Activated CD4-positive, alpha-beta memory T cell treated with anti-CD3 and anti-CD28 coated beads for 36 hours (primary cell): ENCODE measurements at regions of chr12 and their contacts with region 1.

Region 1: DNA sequence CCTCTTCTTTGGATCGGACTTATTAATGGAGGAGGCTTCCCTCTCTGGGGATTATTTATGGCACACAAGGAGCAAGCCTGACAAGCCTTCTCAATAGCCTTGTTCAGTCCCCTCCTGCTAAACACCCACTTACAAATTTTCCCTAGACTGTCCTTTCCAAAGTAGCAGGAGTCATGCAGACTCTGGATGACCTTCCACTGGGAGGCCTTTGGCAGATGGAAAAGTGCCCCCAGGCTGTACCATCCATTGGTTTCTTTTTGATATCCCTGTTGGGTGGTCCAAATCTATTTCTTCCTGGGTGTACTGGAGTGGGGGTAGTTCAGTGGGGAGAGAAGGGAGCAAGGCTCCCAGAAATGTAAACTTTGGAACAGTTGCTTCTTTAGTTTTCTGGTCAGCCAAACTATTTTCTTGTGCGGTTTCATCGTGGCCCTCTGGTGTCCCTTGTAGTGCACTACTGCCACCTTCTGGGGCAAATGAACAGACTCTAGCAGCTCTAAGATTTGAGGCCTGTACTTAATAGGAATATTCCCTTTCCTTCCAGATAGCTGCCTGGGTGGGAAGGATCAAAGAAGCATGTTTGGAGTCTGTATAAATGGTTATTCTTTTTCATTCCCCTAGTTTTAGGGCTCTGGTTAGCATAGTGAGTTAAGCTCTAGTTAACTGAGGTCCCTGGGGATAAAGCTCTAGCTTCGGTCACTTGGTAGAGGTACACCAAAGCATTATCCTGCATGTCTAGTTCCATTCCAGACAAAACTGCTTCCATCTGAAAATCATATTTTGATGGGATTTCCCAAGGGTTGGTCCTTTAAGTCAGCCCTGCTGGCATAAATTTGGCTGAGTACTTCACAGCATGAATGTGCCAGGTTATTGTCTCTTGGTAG is 409.5 kb downstream of the SLC6A15 start:
- DNase-seq: peak; percentile 31
- H3K4me3 Mint-ChIP-seq: no peak overlapping the region
- H3K27ac Mint-ChIP-seq: no peak overlapping the region
- H3K4me1 Mint-ChIP-seq: no peaks in the 10 kb centered on the region
- H3K27me3 Mint-ChIP-seq: no peaks in the 10 kb centered on the region

Region 2: GRCh38 chr12:82527165-82527780 is 1975.9 kb before region 1 on chr12:
- CTCF ChIA-PET with region 1: interaction called, 3 read pairs
- POLR2A ChIA-PET with region 1: no interaction called
- intact Hi-C with region 1: loop called (anchors 2 kb)
- DNase-seq: peak; percentile 11
- H3K4me3 Mint-ChIP-seq: no peak overlapping the region
- H3K27ac Mint-ChIP-seq: no peak overlapping the region
- H3K4me1 Mint-ChIP-seq: no peaks in the 10 kb centered on the region
- H3K27me3 Mint-ChIP-seq: peaks cover 2% of the 10 kb centered on the region

Region 3: GRCh38 chr12:83823431-83823963 is 679.6 kb before region 1 on chr12:
- CTCF ChIA-PET with region 1: no interaction called
- POLR2A ChIA-PET with region 1: no interaction called
- intact Hi-C with region 1: loop called (anchors 5 kb)
- DNase-seq: peak; percentile 51
- H3K4me3 Mint-ChIP-seq: no peak overlapping the region
- H3K27ac Mint-ChIP-seq: no peak overlapping the region
- H3K4me1 Mint-ChIP-seq: no peaks in the 10 kb centered on the region
- H3K27me3 Mint-ChIP-seq: no peaks in the 10 kb centered on the region

Region 4: DNA sequence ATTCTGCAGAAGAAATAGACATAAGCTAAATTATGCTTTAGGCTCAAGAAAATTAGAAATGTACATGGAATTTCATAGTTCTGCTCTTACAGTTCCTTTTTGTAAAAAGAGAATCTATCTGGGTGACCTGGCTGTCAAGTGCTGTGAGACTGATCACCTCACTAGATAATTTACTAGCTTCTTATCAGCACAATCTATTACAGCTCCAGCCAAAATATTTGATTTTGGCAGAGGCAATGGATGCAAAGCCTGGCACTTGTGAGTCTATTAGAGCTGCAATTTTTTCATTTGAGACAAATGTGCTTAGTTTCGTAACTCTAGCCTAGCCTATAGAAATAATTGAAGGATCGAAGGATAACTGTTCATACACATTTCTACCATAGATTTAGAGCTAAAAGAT is 518.1 kb before region 1 on chr12:
- CTCF ChIA-PET with region 1: no interaction called
- POLR2A ChIA-PET with region 1: no interaction called
- intact Hi-C with region 1: no loop called
- DNase-seq: no peak
- H3K4me3 Mint-ChIP-seq: no peak overlapping the region
- H3K27ac Mint-ChIP-seq: no peak overlapping the region
- H3K4me1 Mint-ChIP-seq: no peaks in the 10 kb centered on the region
- H3K27me3 Mint-ChIP-seq: no peaks in the 10 kb centered on the region

Region 5: GRCh38 chr12:84492351-84492883 is 10.7 kb before region 1 on chr12:
- CTCF ChIA-PET with region 1: no interaction called
- POLR2A ChIA-PET with region 1: no interaction called
- intact Hi-C with region 1: no loop called
- DNase-seq: no peak
- H3K4me3 Mint-ChIP-seq: no peak overlapping the region
- H3K27ac Mint-ChIP-seq: no peak overlapping the region
- H3K4me1 Mint-ChIP-seq: no peaks in the 10 kb centered on the region
- H3K27me3 Mint-ChIP-seq: no peaks in the 10 kb centered on the region

Region 6: DNA sequence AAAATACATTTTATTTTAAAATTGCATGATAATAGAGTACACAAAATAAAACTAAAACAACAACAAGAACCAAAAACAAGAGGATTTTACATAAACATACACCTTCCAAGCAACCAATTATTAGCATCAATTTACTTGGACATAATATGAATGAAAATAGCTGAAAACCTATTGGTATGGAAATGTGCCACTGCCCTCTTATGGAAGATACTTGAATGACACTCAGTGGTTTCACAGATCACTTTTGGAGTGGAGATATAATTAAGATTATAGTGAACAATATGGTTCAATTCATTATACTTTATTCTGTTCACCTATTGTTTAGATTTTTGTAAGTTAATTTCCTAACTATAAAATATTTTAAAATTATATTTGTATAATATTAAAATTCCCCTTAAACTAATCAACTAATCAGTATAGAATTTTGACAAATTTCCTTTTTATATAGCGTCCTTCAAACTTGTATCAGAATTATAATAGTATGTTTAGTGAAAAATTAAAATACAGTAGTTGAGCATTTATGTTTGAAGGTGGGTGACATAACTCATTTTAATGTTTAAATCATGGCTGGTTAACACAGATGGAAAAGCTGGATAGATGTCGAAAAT is 339.4 kb after region 1 on chr12:
- CTCF ChIA-PET with region 1: no interaction called
- POLR2A ChIA-PET with region 1: no interaction called
- intact Hi-C with region 1: loop called (anchors 5 kb)
- DNase-seq: no peak
- H3K4me3 Mint-ChIP-seq: no peak overlapping the region
- H3K27ac Mint-ChIP-seq: no peak overlapping the region
- H3K4me1 Mint-ChIP-seq: peaks cover 18% of the 10 kb centered on the region
- H3K27me3 Mint-ChIP-seq: no peaks in the 10 kb centered on the region

Region 7: GRCh38 chr12:84862186-84862585 is 359.0 kb after region 1 on chr12:
- CTCF ChIA-PET with region 1: no interaction called
- POLR2A ChIA-PET with region 1: no interaction called
- intact Hi-C with region 1: no loop called
- DNase-seq: no peak
- H3K4me3 Mint-ChIP-seq: no peak overlapping the region
- H3K27ac Mint-ChIP-seq: no peak overlapping the region
- H3K4me1 Mint-ChIP-seq: no peaks in the 10 kb centered on the region
- H3K27me3 Mint-ChIP-seq: peaks cover 1% of the 10 kb centered on the region